ENCODE measurements at regions of chr6 and their contacts with region 1.

Region 1: DNA sequence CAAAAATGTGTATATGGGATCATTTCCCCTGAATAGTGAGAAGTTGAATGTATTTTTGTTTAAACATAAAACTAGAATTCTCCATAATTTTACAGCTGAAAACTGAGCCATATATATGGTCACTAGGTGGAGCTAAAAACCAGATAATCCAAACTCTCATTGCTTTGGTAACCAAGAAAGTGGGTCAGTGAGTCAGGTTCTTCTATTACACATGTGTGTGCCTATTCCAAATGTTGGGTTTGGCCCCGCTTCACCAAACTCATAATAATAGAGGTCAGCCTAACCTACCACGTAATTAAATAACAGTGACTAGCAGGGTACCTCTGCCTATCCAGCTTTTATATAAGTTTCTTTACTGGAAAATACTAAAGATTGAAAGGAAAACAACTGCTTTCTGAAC is 19.3 kb upstream of the RNGTT start:
- DNase-seq: no peak

Region 2: GRCh38 chr6:89080542-89081422 is 98.1 kb after region 1 on chr6 and contains the start of gene PNRC1:
- intact Hi-C with region 1: loop called in 1 of 2 experiments (anchors 10 kb)
- DNase-seq: peak; percentile 100
- total RNA-seq, gene PNRC1: 280 to 381 TPM

Region 3: GRCh38 chr6:89242574-89243330 is 260.0 kb after region 1 on chr6:
- intact Hi-C with region 1: loop called in 1 of 2 experiments (anchors 5 kb)
- DNase-seq: no peak

Region 4: DNA sequence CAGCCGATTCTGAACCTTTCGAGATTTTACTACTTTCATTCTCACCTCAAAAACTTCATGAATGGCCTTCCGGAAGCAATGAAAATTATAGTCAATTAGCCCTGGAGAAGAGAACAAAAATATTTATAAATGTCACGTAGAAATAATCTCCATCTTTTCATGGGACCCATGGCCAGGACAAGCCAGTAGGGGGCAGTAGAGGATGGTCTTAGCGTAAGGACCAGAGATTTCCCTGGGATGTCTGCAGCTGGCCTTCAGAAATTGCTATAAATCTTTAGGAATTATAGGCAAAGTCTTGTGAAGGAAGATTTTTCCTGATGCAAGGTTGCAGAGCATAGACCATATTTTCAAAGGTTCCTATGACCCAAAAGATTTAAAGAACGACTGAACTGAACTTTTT is 385.4 kb after region 1 on chr6:
- intact Hi-C with region 1: loop called in 1 of 2 experiments (anchors 5 kb)
- DNase-seq: no peak

Measured in posterior vena cava (tissue), 2 donors.